ENCODE measurements at regions of chr1 and their contacts with region 1.

Region 1: DNA sequence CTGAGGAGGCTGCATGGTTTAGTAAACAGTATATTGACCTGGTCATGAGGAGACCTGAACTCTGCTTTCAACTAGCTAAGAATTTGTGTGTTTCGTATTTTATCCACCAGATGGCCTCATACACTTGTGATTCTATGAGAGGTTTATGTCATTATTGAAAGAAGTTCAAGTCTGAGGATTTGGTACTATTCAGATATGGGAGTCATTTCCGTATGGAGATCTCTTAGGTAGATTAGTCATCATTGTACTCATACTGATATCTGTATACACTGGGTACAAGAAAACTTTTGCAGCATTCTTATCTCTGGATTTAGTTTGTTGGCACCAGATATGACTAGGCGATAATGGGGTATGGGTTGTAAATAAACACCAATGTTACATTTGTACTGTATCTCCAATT is 26.6 kb downstream of the ATF6 start:
- DNase-seq: no peak
- H3K4me3 ChIP-seq: no peak overlapping the region
- H3K27ac ChIP-seq: peak overlapping the region in 1 of 2 donors; percentile 56
- H3K4me1 ChIP-seq: no peaks in the 10 kb centered on the region
- H3K27me3 ChIP-seq: no peaks in the 10 kb centered on the region
- CTCF ChIP-seq: peak; percentile 59 to 72 (median 62)
- POLR2A ChIP-seq: no peak

Region 2: DNA sequence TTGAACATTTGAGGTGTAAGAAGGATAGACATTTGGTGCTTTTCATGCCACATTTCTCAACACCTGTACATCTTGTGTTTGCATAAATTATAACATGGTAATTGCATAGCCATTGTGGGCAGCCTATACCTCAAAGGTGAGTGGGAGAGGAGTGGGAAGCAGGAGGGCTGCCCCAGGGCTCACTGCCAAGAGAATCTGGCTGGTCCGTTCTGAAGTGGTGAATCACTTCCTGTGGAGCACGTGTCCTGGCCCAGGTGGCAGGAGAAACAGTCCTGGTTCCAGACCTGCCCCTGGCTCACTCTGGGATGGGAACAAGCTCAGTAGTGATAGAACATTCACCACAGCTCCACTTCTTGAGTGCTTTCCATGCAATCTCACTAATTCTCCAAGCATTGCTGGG is 242.5 kb after region 1 on chr1:
- intact Hi-C with region 1: loop called (anchors 10 kb)
- DNase-seq: no peak
- H3K4me3 ChIP-seq: no peak overlapping the region
- H3K27ac ChIP-seq: no peak overlapping the region
- H3K4me1 ChIP-seq: no peaks in the 10 kb centered on the region
- H3K27me3 ChIP-seq: no peaks in the 10 kb centered on the region
- CTCF ChIP-seq: no peak
- POLR2A ChIP-seq: no peak

Measured in uterus (tissue), 4 donors.